ENCODE measurements at regions of chr19 and their contacts with region 1.

Region 1: DNA sequence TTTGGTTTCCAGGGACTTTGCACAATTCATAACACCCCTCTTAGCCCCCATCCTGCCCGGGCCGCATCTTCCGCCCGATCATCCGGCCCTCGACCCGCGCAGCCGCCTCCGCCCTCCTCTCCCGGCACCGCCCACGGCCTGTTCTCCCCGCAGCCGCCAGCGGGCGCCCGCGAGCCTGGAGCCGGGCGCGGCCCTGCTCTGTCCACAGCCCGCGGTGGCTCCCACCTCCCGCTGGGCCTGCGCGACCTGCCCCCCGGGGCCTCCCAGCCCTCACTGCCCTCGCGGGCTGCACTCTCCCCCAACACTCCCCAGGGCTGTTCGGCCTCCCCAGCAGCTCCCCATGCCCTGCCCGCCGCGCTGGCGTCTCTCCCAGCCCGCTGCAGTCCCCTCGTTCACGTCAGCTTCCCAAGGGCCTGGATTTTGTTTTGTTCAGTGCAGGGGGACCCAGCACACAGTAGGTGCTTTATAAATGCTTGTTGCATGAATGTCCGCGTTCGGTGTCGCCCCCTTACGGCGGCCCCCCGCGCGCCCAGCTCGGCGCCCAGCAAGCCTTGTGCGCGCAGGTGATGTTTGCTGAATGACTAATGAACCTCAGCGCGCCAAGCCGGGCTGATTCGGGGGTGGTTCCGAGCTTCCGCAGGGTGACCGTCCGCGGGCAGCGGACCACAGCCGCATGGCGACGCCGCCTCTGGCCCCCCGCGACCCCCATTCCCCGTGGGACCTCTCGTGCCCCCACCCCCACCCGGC is 4.6 kb upstream of the APC2 start:
- DNase-seq: peak; percentile 81
- H3K4me3 Mint-ChIP-seq: peak overlapping the region; percentile 70
- H3K27ac Mint-ChIP-seq: peak overlapping the region; percentile 63
- H3K4me1 Mint-ChIP-seq: peaks cover 7% of the 10 kb centered on the region
- H3K27me3 Mint-ChIP-seq: peaks cover 26% of the 10 kb centered on the region

Region 2: GRCh38 chr19:1455336-1456120 is 10.2 kb after region 1 on chr19:
- intact Hi-C with region 1: loop called (anchors 1 kb)
- DNase-seq: peak; percentile 49
- H3K4me3 Mint-ChIP-seq: no peak overlapping the region
- H3K27ac Mint-ChIP-seq: peak overlapping the region; percentile 2
- H3K4me1 Mint-ChIP-seq: peaks cover 5% of the 10 kb centered on the region
- H3K27me3 Mint-ChIP-seq: peaks cover 44% of the 10 kb centered on the region

Region 3: DNA sequence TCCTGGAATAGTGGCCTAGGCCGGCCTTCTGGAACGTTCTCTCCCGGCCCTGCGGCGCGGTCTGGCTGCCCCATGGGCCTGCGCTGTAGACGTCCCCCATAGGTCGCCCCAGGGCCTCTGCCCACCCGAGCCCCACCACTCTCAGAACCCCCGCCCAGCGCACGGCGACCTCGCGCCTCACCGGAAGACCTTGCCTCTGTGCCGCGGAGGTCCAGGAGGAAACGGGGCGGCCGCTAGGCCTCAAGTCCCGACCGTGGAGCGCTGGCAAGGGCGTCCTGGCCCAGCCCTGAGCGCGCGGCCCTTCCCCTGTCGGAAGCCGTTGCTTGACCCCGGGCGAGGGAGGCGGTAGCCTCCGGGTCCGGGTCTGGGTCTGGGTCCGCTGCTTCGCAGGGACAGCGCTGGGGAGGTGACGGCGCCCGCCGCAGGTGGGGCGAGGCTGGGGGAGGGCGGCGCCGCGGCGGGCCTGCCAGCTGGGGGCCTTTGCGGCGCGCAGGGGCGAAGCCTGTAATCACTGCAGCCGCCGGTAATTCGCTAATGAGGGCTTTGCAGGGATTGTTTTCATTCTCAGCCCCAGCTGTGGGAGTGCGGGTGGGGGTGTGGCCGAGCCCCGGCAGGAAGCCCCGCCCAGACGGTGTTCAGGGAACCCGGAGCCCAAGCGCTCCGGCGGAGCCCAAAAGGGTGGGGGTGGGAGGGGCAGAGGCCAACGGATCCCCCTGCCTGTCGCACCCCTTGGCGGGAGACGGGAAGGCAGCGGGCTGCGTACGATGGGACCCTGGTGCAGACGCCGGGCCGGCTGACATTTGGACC is 25.0 kb after region 1 on chr19:
- intact Hi-C with region 1: loop called (anchors 1 kb)
- DNase-seq: peak; percentile 64
- H3K4me3 Mint-ChIP-seq: peak overlapping the region; percentile 75
- H3K27ac Mint-ChIP-seq: peak overlapping the region; percentile 65
- H3K4me1 Mint-ChIP-seq: no peaks in the 10 kb centered on the region
- H3K27me3 Mint-ChIP-seq: peaks cover 12% of the 10 kb centered on the region

Region 4: GRCh38 chr19:1513499-1514294 is 68.3 kb after region 1 on chr19:
- intact Hi-C with region 1: loop called (anchors 2 kb)
- DNase-seq: peak; percentile 57
- H3K4me3 Mint-ChIP-seq: no peak overlapping the region
- H3K27ac Mint-ChIP-seq: no peak overlapping the region
- H3K4me1 Mint-ChIP-seq: no peaks in the 10 kb centered on the region
- H3K27me3 Mint-ChIP-seq: peaks cover 12% of the 10 kb centered on the region

Region 5: DNA sequence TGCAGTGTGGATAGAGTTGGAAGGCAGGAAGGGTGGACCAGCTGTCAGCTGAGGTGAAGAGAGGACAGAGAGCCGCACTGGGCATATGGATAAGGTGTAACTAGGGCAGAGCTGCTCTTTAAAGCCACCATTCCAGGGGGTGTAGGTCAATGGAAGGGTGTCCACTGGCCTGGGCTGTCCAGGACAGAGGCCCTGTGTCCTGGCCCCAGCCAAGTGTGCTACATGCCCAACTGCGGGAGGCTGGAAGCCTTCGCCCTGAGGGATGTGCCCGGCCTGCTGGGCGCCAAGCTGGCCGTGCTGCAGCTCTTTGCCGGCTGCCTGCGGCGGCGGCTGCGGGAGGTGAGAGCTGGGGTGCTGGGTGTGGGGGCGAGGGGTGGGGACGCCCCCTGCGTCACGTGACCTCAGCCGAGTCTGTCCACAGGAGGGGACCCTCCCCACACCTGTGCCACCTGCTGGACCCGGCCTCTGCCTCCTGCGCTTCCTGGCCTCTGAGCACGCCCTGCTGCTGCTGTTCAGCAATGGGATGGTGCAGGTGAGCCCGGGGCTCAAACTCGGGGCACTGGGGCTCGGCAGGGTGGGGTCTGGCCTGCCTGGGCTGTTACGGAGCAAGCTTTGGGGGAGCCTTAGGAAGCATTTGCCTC is 88.3 kb after region 1 on chr19:
- intact Hi-C with region 1: no loop called
- DNase-seq: no peak
- H3K4me3 Mint-ChIP-seq: no peak overlapping the region
- H3K27ac Mint-ChIP-seq: no peak overlapping the region
- H3K4me1 Mint-ChIP-seq: no peaks in the 10 kb centered on the region
- H3K27me3 Mint-ChIP-seq: peaks cover under 1% of the 10 kb centered on the region

Region 6: DNA sequence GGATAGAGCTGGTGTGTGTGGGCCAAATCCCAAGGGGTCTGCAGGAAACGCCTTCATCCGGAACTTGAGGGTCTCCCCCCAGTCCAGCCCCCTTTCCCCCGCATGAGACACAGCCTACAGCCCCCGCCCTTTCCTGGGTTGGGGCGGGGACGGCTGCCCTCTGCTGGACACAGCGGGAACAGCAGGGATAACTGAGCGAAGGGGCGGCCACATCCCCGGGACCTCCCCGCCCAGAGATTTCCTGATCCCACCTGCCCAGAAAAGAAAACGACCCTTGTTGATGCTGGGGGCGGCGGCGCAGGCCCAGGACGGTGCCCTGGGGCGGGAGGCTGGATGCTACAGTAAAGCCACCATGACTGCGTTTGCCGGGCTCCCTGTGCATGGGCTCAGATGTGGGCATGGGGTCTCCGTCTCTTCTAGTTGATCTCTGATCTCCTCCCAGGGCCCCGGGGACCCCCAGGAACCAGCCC is 322.1 kb after region 1 on chr19:
- intact Hi-C with region 1: loop called (anchors 5 kb)
- DNase-seq: peak; percentile 42
- H3K4me3 Mint-ChIP-seq: no peak overlapping the region
- H3K27ac Mint-ChIP-seq: no peak overlapping the region
- H3K4me1 Mint-ChIP-seq: no peaks in the 10 kb centered on the region
- H3K27me3 Mint-ChIP-seq: peaks cover 66% of the 10 kb centered on the region